Activated naive CD4-positive, alpha-beta T cell treated with anti-CD3 and anti-CD28 coated beads, Interleukin-2, amount 10 ng/mL, durations not matched to agents 7 days and 5 days (primary cell): ENCODE measurements at regions of chr3 and their contacts with region 1.

Region 1: DNA sequence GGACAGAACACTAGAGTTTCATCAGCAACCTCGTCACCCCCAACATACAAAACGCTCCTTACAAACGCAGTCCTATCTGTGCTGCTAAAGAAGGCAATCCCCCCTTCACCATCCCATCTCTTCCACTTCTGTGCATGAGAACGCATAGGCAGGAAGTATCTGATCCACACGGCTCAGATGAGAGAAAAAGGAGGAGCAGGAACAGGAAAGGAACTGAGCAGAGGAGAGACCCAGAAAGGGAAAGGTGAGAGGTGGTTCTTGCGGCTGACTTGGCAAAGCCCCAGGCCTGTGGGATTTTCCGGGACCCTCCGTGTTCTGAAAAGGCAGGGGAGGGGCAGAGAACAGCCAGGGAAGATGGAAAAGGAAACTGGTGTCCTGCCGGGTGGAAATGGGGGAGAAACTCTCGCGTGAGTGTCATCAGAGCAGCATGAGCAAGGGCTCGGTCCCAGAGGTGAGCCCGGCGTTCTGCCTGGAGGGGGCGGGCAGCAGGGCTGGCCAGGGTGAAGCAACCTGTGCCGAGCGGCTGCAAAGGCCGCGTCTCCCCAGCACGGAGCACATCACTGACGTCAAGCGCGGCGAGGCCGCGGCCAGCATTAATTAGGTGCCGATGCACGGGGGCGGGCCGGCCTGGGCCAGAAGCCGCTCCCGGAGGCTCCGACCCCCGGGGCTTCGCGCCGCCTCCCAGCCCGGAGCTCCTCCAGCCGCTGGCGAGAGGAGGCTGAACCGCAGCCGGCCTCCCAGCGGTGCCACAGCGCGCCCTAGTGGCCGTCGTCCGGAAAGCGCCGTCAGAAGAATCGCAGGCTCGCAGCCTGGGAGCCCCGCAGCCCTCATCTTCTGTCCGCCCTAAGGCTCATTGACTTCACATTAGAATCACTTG is 35.8 kb downstream of the CPN2 start:
- DNase-seq: peak; percentile 86
- H3K4me3 Mint-ChIP-seq: peak overlapping the region; percentile 64
- H3K27ac Mint-ChIP-seq: peak overlapping the region; percentile 35
- H3K4me1 Mint-ChIP-seq: peaks cover 60% of the 10 kb centered on the region
- H3K27me3 Mint-ChIP-seq: peaks cover 53% of the 10 kb centered on the region

Region 2: DNA sequence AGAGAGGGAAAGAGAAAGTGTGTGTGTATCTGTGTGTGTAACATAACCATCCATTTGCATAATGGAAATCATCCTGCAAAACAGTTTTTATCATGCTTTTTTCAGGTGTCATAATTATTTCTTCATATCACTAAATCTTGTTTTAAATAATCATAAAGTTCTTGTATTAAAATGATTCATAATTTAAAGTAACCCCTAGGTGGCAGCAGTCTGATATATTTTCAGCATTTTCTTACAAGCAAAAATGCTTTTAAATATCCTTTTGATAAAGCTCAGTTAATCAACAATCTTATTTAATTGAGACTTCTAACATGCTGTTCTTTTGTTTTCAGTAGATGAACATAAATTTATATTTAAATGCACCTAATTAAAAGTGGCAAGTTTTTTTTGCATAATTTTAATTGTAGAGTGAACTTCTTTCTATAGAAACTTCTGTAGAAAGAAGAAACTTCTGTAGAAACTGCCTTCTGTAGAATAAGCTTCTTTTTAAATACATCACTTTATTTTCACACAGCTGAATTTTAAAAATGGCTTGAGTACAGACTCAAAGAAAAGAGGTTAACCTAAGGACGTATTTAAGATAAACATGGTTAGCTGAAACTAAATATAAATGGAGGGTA is 649.8 kb before region 1 on chr3:
- CTCF ChIA-PET with region 1: interaction called, 28 read pairs
- DNase-seq: no peak
- H3K4me3 Mint-ChIP-seq: no peak overlapping the region
- H3K27ac Mint-ChIP-seq: no peak overlapping the region
- H3K4me1 Mint-ChIP-seq: no peaks in the 10 kb centered on the region
- H3K27me3 Mint-ChIP-seq: no peaks in the 10 kb centered on the region

Region 3: DNA sequence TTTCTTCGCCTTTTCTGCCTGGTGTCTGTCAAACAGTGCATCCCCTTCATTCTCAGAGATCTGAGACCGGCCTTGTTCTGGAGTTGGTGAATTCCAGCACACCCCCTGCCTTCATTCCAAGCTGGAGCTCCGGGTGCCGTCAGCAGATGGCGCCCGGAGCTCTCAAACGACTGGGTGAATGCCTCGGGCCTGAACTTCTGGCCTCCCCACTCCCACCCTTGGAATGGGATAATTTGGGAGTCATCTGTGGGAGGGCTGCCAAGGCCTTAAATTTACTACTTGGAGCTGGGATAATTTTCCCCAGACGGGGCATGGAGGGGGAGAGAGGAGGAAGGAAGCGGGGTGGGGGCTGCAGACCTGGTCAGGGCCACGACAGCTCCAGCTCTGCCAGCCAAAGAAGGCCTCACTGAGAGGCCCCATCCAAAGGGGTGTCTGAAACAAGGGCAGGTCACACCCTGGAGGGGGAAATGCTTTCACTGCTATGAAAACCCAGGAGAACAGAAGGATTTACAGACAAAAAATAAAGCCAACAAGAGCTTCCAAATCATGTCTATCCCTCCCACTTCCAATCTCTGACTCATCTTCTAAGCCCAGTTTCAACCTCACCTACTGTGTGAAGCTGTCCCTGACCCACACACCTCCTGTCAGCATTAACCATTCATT is 534.4 kb before region 1 on chr3:
- CTCF ChIA-PET with region 1: interaction called, 70 read pairs
- DNase-seq: peak; percentile 41
- H3K4me3 Mint-ChIP-seq: no peak overlapping the region
- H3K27ac Mint-ChIP-seq: no peak overlapping the region
- H3K4me1 Mint-ChIP-seq: peaks cover 34% of the 10 kb centered on the region
- H3K27me3 Mint-ChIP-seq: peaks cover 65% of the 10 kb centered on the region

Region 4: GRCh38 chr3:193788189-193788991 is 526.9 kb before region 1 on chr3:
- CTCF ChIA-PET with region 1: interaction called, 70 read pairs
- DNase-seq: peak; percentile 35
- H3K4me3 Mint-ChIP-seq: no peak overlapping the region
- H3K27ac Mint-ChIP-seq: no peak overlapping the region
- H3K4me1 Mint-ChIP-seq: peaks cover 6% of the 10 kb centered on the region
- H3K27me3 Mint-ChIP-seq: peaks cover 70% of the 10 kb centered on the region

Region 5: GRCh38 chr3:193968380-193968974 is 346.8 kb before region 1 on chr3:
- CTCF ChIA-PET with region 1: interaction called, 10 read pairs
- DNase-seq: no peak
- H3K4me3 Mint-ChIP-seq: no peak overlapping the region
- H3K27ac Mint-ChIP-seq: no peak overlapping the region
- H3K4me1 Mint-ChIP-seq: peaks cover 31% of the 10 kb centered on the region
- H3K27me3 Mint-ChIP-seq: peaks cover 59% of the 10 kb centered on the region

Region 6: GRCh38 chr3:194130807-194131589 is 184.3 kb before region 1 on chr3:
- CTCF ChIA-PET with region 1: interaction called, 15 read pairs
- DNase-seq: peak; percentile 54
- H3K4me3 Mint-ChIP-seq: peak overlapping the region; percentile 29
- H3K27ac Mint-ChIP-seq: no peak overlapping the region
- H3K4me1 Mint-ChIP-seq: peaks cover 49% of the 10 kb centered on the region
- H3K27me3 Mint-ChIP-seq: peaks cover 91% of the 10 kb centered on the region

Region 7: DNA sequence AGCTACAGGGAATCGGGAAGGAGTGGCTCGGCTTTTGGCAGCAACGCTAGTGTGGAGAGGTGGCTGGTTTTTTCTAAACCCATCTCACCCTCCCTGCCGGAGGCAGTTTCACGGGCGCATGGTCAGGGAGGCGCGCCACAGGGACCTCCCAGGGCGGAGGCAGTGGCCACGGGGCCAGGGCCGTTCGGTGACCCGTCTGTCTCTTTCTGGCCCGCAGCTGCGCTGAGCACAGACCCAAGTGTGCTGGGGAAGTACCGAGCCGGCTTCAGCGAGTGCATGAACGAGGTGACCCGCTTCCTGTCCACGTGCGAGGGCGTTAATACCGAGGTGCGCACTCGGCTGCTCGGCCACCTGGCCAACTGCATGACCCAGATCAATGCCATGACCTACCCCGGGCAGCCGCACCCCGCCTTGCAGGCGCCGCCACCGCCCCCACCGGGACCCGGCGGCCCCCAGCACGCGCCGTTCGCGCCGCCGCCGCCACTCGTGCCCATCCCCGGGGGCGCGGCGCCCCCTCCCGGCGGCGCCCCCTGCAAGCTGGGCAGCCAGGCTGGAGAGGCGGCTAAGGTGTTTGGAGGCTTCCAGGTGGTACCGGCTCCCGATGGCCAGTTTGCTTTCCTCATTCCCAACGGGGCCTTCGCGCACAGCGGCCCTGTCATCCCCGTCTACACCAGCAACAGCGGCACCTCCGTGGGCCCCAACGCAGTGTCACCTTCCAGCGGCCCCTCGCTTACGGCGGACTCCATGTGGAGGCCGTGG is 177.7 kb before region 1 on chr3:
- CTCF ChIA-PET with region 1: interaction called, 14 read pairs
- DNase-seq: peak; percentile 67
- H3K4me3 Mint-ChIP-seq: peak overlapping the region; percentile 89
- H3K27ac Mint-ChIP-seq: peak overlapping the region; percentile 68
- H3K4me1 Mint-ChIP-seq: peaks cover 70% of the 10 kb centered on the region
- H3K27me3 Mint-ChIP-seq: peaks cover 80% of the 10 kb centered on the region

Region 8: GRCh38 chr3:194381460-194381875 is 66.1 kb after region 1 on chr3:
- CTCF ChIA-PET with region 1: no interaction called
- DNase-seq: no peak
- H3K4me3 Mint-ChIP-seq: no peak overlapping the region
- H3K27ac Mint-ChIP-seq: no peak overlapping the region
- H3K4me1 Mint-ChIP-seq: no peaks in the 10 kb centered on the region
- H3K27me3 Mint-ChIP-seq: peaks cover 52% of the 10 kb centered on the region